ENCODE measurements at regions of chr3 and their contacts with region 1.

Region 1: DNA sequence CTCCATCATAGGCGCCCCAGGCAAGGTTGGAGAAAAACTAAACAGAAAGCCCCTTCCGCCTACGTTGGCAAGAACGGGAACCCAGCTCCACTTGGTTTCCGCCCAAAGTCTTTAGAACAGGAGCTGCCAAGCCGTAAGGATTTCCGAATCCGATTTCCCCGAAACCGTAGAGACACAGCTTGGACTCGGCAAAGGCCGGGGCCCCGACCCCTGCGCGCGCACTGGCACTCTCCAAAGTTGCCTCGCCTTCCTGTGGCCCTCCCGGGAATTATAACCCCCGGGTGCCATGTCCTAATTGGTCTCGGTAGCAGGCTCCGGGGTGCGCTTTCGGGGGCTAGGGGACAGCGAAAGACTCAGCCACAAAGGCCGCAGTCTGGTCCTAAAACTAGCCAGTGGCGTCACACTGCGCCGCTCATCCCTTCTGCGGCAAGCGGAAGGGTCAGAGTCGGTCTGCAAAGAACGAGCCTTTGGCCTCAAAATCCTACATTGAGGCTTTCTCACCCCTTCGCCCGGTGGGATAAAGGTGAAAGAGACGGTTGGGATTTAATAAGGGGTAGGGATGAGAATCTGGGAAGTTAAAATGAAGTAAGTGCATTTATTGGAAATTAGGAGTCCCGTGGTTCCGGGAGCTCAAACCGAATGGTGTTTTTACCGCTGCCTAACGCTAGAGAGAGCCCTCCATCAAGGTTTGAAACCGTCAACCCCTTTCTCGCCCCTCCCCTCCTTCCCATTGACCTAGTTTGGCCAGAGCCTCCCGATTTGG is 6.8 kb downstream of the BCL6 start:
- DNase-seq: no peak
- H3K4me3 ChIP-seq: peak overlapping the region; percentile 94
- CTCF ChIP-seq: peak; percentile 76

Region 2: DNA sequence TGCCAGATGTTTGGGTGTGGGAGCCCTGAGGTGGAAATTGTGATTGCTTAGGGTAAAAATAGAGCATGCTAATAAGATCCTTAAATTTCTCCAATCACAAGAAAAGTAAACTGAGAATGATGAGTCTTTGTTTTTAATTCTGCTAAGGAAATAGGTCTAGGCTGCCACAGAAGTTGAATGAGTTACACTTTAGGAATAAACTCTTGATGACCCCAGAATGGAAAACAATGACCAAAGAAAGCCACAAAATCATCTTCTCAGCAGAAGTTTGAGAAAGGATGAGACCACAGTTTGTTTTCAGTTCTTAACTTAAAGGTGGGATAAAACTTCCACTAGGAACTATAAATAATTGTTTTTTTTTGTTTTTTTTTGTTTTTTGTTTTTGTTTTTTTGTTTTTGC is 171.4 kb after region 1 on chr3:
- CTCF ChIA-PET with region 1: no interaction called
- POLR2A ChIA-PET with region 1: no interaction called
- DNase-seq: no peak
- H3K4me3 ChIP-seq: no peak overlapping the region
- CTCF ChIP-seq: no peak

Region 3: DNA sequence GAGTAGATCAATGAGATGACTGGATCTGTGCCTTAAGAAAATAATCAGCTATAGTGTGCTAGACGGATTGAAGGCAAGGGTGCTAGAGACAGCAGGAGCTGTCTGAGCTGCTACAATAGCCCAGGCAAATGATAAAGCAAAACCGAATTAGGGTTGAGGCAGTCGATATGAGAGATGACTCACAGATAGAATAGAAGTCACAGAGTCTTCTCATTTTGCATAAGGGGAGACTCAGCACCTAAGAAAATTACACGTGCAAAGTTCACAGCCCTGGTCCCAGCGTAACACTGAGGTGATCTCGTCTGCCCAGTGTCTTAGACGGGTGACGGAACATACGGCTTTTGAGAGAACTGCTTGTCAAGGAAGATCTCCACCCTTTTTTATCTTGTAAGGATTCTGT is 427.1 kb after region 1 on chr3:
- CTCF ChIA-PET with region 1: interaction called, 10 read pairs
- POLR2A ChIA-PET with region 1: interaction called, 3 read pairs
- DNase-seq: no peak
- H3K4me3 ChIP-seq: no peak overlapping the region
- CTCF ChIP-seq: no peak

Region 4: DNA sequence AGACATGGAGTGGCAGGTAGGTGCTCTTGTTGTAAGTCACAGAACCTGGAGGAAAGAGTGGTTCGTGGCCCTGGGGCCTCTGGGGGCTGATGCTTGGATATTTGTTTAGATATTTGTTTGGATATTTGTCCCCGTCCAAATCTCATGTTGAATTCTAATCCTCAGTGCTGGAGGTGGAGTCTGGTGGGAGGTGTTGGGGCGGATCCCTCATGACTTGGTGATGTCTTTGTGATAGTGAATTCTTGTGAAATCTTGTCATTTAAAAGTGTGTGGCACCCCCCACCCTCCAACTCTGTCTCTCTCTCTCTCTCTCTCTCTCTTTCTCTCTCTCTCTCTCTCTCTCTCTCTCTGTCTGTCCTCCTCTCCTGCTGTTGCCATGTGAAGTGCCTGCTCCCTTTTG is 537.9 kb after region 1 on chr3:
- CTCF ChIA-PET with region 1: interaction called, 14 read pairs
- POLR2A ChIA-PET with region 1: interaction called, 9 read pairs
- DNase-seq: no peak
- H3K4me3 ChIP-seq: no peak overlapping the region
- CTCF ChIP-seq: no peak

Region 5: GRCh38 chr3:188331166-188331565 is 592.7 kb after region 1 on chr3:
- CTCF ChIA-PET with region 1: interaction called, 13 read pairs
- POLR2A ChIA-PET with region 1: interaction called, 3 read pairs
- DNase-seq: no peak
- H3K4me3 ChIP-seq: no peak overlapping the region
- CTCF ChIP-seq: no peak

Region 6: DNA sequence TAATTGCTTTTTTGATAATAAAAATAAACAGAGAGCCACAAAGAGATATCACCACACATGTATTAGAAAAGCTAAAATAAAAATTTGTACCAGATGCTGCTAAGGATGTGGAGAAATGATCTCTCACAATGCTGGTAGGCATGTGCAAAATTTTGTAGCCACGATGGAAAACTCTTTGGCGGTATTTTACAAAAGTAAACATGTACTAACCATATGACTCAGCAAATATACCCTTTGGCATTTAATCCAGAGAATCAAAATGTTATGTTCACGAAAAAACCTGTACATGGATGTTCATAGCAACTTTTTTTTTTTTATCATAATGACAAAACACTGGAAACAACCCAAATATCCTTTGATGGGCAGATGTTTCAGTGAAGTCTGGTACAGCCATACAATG is 676.7 kb after region 1 on chr3:
- CTCF ChIA-PET with region 1: interaction called, 13 read pairs
- POLR2A ChIA-PET with region 1: no interaction called
- DNase-seq: no peak
- H3K4me3 ChIP-seq: no peak overlapping the region
- CTCF ChIP-seq: no peak

Region 7: GRCh38 chr3:188687389-188687788 is 948.9 kb after region 1 on chr3:
- CTCF ChIA-PET with region 1: interaction called, 14 read pairs
- POLR2A ChIA-PET with region 1: no interaction called
- DNase-seq: peak; percentile 38
- H3K4me3 ChIP-seq: no peak overlapping the region
- CTCF ChIP-seq: peak; percentile 31

Region 8: DNA sequence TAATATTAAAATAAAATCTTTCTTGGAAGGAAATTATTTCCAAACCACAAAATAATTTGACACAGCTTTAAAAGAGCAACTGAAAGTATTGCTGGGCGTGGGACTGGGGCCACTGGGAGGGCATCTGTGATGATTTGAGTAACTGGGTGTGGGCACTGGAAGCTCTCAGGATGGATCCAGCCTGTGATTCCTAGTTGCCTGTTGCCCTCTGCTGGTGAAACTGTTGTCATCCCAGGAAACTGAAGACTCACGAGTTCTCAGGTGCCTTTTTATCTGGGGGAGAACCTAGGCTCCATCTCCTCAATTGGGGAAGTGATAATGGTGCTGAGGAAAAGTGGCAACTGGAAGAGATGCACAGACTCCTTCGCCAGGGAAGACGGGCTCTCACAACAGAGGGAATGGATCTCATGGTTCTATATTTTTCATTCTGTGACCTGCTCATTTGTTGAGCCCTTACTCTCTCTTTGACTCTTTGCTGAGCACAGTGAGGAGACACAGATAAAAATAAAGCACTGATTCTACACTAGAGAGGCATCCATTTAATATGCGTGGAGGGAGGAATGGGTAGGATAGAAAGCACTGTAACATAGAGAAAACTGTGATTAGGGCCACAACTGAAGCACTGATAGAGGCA is 1494.8 kb after region 1 on chr3:
- CTCF ChIA-PET with region 1: interaction called, 28 read pairs
- POLR2A ChIA-PET with region 1: no interaction called
- DNase-seq: peak; percentile 14
- H3K4me3 ChIP-seq: no peak overlapping the region
- CTCF ChIP-seq: peak; percentile 76